Mammary epithelial cell (primary cell): ENCODE measurements at regions of chr9 and their contacts with region 1.

Region 1: GRCh38 chr9:69155341-69156030 is 18.6 kb upstream of the TJP2 start:
- DNase-seq: peak; percentile 90
- H3K4me3 ChIP-seq: no peak overlapping the region
- H3K27ac ChIP-seq: peak overlapping the region; percentile 53
- H3K4me1 ChIP-seq: peaks cover 11% of the 10 kb centered on the region
- H3K27me3 ChIP-seq: no peaks in the 10 kb centered on the region
- CTCF ChIP-seq: no peak

Region 2: DNA sequence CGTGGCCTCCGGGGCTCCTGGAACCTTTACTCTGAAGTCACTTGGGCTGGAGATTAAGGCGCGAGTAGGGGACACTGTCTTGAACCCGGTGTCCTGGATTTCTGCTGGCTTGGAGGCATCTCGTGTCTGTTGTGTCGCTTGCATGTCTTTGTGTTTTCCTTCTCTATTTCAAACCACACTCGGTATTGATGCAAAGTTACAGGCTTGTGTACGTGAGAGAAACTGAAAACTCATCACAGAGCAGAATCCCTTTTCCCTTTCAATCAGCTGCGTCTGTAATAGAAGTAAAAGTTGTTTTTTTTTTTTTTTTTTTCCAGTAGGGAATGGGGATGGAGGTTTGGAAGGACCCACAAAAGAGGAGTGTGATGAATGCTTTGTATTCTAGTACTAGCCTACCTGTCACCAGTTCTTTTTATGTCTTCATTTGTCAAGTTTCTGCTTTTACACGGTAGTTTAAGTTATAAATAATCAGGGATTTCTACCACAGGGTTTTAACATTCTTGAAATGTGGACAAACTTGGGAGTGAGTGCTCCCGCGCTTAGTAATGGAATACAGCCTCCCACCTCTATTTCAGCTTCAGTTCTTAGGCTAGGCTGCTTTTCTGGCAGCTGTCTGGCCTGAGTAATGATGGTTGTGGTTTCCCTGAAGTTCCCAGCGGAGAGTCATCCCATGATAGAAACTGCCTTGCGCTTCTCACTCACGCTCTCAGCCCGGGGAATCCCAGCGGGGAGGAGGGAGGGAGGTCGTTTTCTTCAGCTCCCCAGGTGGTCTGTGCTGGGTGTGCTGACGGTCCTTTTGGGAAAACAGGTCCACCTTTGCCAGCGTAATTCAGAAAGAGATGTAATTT is 19.4 kb after region 1 on chr9:
- CTCF ChIA-PET with region 1: interaction called, 10 read pairs
- dilution Hi-C with region 1: no loop called
- in situ Hi-C with region 1: no loop called
- intact Hi-C with region 1: no loop called
- DNase-seq: peak; percentile 97
- H3K4me3 ChIP-seq: peak overlapping the region; percentile 69 to 95 (median 76)
- H3K27ac ChIP-seq: peak overlapping the region; percentile 99
- H3K4me1 ChIP-seq: peaks cover 79% of the 10 kb centered on the region
- H3K27me3 ChIP-seq: no peaks in the 10 kb centered on the region
- CTCF ChIP-seq: no peak

Region 3: GRCh38 chr9:69186841-69187611 is 31.5 kb after region 1 on chr9:
- CTCF ChIA-PET with region 1: interaction called, 15 read pairs
- dilution Hi-C with region 1: no loop called
- in situ Hi-C with region 1: no loop called
- intact Hi-C with region 1: no loop called
- DNase-seq: peak; percentile 62
- H3K4me3 ChIP-seq: no peak overlapping the region
- H3K27ac ChIP-seq: peak overlapping the region; percentile 75
- H3K4me1 ChIP-seq: peaks cover 24% of the 10 kb centered on the region
- H3K27me3 ChIP-seq: no peaks in the 10 kb centered on the region
- CTCF ChIP-seq: no peak

Region 4: DNA sequence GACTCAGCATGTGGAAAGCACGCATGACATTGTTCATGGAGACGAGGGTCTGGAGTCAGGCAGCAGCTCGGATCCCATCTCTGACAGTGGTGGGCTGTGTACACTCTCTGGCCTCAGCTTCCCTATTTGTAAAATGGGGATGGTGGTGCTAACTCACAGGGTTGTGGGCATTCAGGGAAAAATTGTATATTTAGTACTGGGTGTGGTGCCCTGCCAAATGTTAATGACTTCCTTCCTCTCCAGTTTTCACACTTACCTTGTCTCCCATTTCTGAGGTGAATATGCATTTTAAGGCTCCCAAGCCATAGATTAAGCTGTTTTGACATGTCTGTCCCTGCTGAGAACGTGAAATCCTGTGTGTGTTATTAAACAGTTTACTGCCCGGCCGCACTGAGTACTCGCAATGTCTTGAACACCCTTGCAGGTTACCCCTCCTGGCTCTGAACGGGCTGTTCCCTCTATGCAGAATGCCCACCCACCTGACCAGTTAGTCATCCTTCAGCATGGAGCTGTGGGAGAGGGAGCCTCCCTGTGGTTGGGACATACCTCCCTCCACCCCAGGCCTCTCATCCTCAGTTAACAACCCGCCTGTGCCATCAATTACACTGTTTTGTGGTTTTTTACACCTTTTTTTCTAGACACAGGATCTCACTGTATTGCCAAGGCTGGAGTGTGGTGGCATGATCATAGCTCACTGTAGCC is 44.4 kb after region 1 on chr9:
- CTCF ChIA-PET with region 1: no interaction called
- dilution Hi-C with region 1: loop called (anchors 5 kb)
- in situ Hi-C with region 1: no loop called
- intact Hi-C with region 1: no loop called
- DNase-seq: peak; percentile 80
- H3K4me3 ChIP-seq: no peak overlapping the region
- H3K27ac ChIP-seq: no peak overlapping the region
- H3K4me1 ChIP-seq: peaks cover 21% of the 10 kb centered on the region
- H3K27me3 ChIP-seq: no peaks in the 10 kb centered on the region
- CTCF ChIP-seq: peak in 1 of 2 donors; percentile 41

Region 5: DNA sequence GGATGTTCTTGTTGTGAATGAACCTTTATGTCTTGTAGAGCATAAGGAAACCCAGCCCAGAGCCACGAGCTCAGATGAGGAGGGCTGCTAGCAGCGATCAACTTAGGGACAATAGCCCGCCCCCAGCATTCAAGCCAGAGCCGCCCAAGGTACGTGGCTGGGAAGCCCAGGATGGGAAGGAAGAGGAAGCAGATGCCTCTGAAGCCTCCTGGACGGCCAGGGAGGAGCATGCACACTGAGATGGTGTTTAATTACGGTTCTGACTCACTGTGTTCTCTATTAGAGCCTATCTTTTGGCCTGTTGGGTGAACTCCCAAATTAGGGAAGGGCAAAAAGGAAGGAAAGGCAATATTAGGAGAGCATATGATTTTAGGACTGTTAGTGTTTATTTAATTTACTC is 93.9 kb after region 1 on chr9:
- CTCF ChIA-PET with region 1: no interaction called
- dilution Hi-C with region 1: no loop called
- in situ Hi-C with region 1: no loop called
- intact Hi-C with region 1: no loop called
- DNase-seq: no peak
- H3K4me3 ChIP-seq: no peak overlapping the region
- H3K27ac ChIP-seq: no peak overlapping the region
- H3K4me1 ChIP-seq: peaks cover 12% of the 10 kb centered on the region
- H3K27me3 ChIP-seq: no peaks in the 10 kb centered on the region
- CTCF ChIP-seq: no peak

Region 6: DNA sequence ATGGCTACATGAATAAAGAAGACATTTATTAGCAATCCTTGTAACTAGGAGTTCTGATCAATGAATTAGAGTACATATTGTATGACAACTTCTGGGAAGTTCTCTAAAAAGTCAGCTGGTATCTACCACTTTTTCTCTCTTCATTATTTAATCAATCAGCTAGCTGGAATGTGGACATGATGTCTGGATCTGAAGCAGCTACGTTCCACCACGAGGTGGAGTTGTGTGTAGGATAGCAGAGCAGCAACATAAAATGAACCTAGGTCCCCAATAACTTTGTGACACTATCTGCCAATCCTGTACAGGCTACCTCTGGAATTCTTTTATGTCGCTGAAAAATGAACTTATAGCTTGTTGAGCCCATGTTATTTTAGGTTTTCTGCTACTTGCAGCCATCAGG is 136.6 kb after region 1 on chr9:
- CTCF ChIA-PET with region 1: no interaction called
- dilution Hi-C with region 1: no loop called
- in situ Hi-C with region 1: no loop called
- intact Hi-C with region 1: no loop called
- DNase-seq: no peak
- H3K4me3 ChIP-seq: no peak overlapping the region
- H3K27ac ChIP-seq: no peak overlapping the region
- H3K4me1 ChIP-seq: no peaks in the 10 kb centered on the region
- H3K27me3 ChIP-seq: no peaks in the 10 kb centered on the region
- CTCF ChIP-seq: peak; percentile 10 to 20